ENCODE measurements at regions of chr9 and their contacts with region 1.

Region 1: GRCh38 chr9:105694190-105694847 is at the start of gene TMEM38B:
- DNase-seq: peak; percentile 77 to 86 (median 83)
- H3K4me3 ChIP-seq: peak within 1 kb of the TSS; percentile 59 to 79
- H3K4me3 Mint-ChIP-seq: peak within 1 kb of the TSS; percentile 87 to 96 (median 90)
- H3K27ac ChIP-seq: peak within 1 kb of the TSS; percentile 37
- H3K27ac Mint-ChIP-seq: peak within 1 kb of the TSS; percentile 63 to 85 (median 79)
- H3K4me1 ChIP-seq: peaks cover 20% of the 10 kb centered on the region
- H3K4me1 Mint-ChIP-seq: peaks cover 16 to 31% (median 23%) of the 10 kb centered on the region in 4 donors
- H3K27me3 ChIP-seq: peaks cover 11% of the 10 kb centered on the region
- H3K27me3 Mint-ChIP-seq: peaks cover 7 to 21% of the 10 kb centered on the region in 2 donors
- total RNA-seq, gene TMEM38B: 13.4 to 16.6 TPM

Region 2: GRCh38 chr9:104093647-104094533 is 1600.4 kb before region 1 on chr9 and contains the start of gene SMC2:
- CTCF ChIA-PET with region 1: no interaction called
- POLR2A ChIA-PET with region 1: no interaction called
- intact Hi-C with region 1: loop called (anchors 2 kb)
- DNase-seq: peak; percentile 93 to 96 (median 95)
- H3K4me3 ChIP-seq: peak within 1 kb of the TSS; percentile 63 to 90
- H3K4me3 Mint-ChIP-seq: peak within 1 kb of the TSS; percentile 98 to 100 (median 99)
- H3K27ac ChIP-seq: peak within 1 kb of the TSS; percentile 79
- H3K27ac Mint-ChIP-seq: peak within 1 kb of the TSS; percentile 99 to 100 (median 99)
- H3K4me1 ChIP-seq: peaks cover 30% of the 10 kb centered on the region
- H3K4me1 Mint-ChIP-seq: peaks cover 26 to 46% (median 30%) of the 10 kb centered on the region in 4 donors
- H3K27me3 ChIP-seq: no peaks in the 10 kb centered on the region
- H3K27me3 Mint-ChIP-seq: peaks cover 0 to 3% of the 10 kb centered on the region in 2 donors
- total RNA-seq, gene SMC2: 9.7 to 10.4 TPM

Region 3: GRCh38 chr9:104991144-104991953 is 703.0 kb before region 1 on chr9:
- CTCF ChIA-PET with region 1: no interaction called
- POLR2A ChIA-PET with region 1: no interaction called
- intact Hi-C with region 1: loop called (anchors 2 kb)
- DNase-seq: peak; percentile 85 to 88 (median 88)
- H3K4me3 ChIP-seq: peak overlapping the region; percentile 94 to 98
- H3K4me3 Mint-ChIP-seq: peak overlapping the region; percentile 87 to 94 (median 92)
- H3K27ac ChIP-seq: peak overlapping the region; percentile 76
- H3K27ac Mint-ChIP-seq: peak overlapping the region; percentile 96 to 99 (median 98)
- H3K4me1 ChIP-seq: peaks cover 38% of the 10 kb centered on the region
- H3K4me1 Mint-ChIP-seq: peaks cover 21 to 45% (median 33%) of the 10 kb centered on the region in 4 donors
- H3K27me3 ChIP-seq: no peaks in the 10 kb centered on the region
- H3K27me3 Mint-ChIP-seq: peaks cover 0 to 1% of the 10 kb centered on the region in 2 donors

Region 4: DNA sequence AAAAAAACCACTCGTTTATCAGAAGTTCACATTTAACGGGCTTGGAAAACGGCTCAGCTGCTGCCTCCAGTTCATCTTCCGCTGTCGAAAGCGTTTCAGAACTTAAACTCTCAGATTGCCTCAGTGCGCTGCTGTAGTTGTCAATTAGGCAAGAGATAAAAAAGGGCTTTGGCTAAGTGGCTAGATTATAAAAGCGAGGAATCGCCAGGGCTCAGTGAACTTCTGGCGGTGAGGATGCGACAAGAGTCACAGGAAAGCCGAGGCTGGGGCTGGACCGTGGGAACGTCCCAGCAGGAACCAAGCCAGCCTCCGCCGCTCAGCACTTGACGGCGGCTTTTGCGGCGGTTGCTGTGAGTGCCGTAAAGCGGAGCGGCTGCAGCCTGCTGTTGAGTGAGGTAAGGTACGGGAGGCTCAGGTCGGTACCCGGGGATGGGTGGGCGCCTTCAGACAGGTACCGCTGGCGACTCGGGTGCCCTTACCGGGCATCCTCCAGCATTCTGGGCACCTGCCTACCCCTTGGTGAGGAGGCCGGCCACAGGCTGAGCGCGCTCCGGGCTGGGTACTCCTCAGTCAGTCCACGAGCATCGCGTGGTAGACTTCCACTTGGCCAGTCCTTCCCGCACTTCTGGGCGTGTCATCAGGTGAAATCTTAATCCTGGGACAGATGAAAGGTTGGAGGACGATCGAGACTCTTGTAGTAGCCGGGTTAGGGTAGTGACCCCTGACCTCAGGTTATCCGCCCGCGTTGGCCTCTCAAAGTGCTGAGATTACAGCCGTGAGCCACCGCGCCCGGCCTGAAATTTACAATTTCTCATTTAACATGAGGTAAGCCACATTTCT is 136.3 kb before region 1 on chr9 and contains the start of gene FKTN:
- CTCF ChIA-PET with region 1: no interaction called
- POLR2A ChIA-PET with region 1: no interaction called
- intact Hi-C with region 1: loop called (anchors 2 kb)
- DNase-seq: peak; percentile 81 to 86 (median 83)
- H3K4me3 ChIP-seq: peak within 1 kb of the TSS; percentile 76 to 77
- H3K4me3 Mint-ChIP-seq: peak within 1 kb of the TSS; percentile 89 to 97 (median 96)
- H3K27ac ChIP-seq: peak within 1 kb of the TSS; percentile 46
- H3K27ac Mint-ChIP-seq: peak within 1 kb of the TSS; percentile 74 to 95 (median 90)
- H3K4me1 ChIP-seq: peaks cover 10% of the 10 kb centered on the region
- H3K4me1 Mint-ChIP-seq: peaks cover 14 to 24% (median 20%) of the 10 kb centered on the region in 4 donors
- H3K27me3 ChIP-seq: no peaks in the 10 kb centered on the region
- H3K27me3 Mint-ChIP-seq: no peaks in the 10 kb centered on the region
- total RNA-seq, gene FKTN: 13.9 to 14.2 TPM

Region 5: DNA sequence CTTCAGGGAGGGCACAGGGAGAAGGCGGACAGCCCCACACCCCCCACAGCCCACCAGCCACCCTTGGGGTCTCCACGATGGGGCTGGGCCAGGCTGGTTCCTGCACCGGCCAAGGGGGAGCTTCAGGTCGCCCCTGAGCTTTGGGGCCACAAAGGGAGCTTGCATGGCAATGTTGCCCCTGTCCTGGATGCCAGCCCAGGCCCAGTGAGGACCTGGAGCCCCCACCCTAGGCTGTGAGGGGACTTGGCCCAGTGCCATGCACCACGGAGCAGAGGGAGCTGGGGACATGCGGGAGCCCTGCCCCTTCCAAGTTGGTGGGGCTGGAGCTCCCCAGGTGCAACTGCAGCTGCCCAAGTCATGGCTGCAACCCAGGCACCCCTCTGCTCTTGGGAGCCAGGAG is 18.5 kb after region 1 on chr9:
- CTCF ChIA-PET with region 1: interaction called, 12 read pairs
- POLR2A ChIA-PET with region 1: interaction called, 5 read pairs
- intact Hi-C with region 1: no loop called
- DNase-seq: no peak
- H3K4me3 ChIP-seq: no peak overlapping the region
- H3K4me3 Mint-ChIP-seq: no peak overlapping the region
- H3K27ac ChIP-seq: no peak overlapping the region
- H3K27ac Mint-ChIP-seq: no peak overlapping the region
- H3K4me1 ChIP-seq: no peaks in the 10 kb centered on the region
- H3K4me1 Mint-ChIP-seq: peaks cover 0 to 10% (median 6%) of the 10 kb centered on the region in 4 donors
- H3K27me3 ChIP-seq: no peaks in the 10 kb centered on the region
- H3K27me3 Mint-ChIP-seq: no peaks in the 10 kb centered on the region

Region 6: DNA sequence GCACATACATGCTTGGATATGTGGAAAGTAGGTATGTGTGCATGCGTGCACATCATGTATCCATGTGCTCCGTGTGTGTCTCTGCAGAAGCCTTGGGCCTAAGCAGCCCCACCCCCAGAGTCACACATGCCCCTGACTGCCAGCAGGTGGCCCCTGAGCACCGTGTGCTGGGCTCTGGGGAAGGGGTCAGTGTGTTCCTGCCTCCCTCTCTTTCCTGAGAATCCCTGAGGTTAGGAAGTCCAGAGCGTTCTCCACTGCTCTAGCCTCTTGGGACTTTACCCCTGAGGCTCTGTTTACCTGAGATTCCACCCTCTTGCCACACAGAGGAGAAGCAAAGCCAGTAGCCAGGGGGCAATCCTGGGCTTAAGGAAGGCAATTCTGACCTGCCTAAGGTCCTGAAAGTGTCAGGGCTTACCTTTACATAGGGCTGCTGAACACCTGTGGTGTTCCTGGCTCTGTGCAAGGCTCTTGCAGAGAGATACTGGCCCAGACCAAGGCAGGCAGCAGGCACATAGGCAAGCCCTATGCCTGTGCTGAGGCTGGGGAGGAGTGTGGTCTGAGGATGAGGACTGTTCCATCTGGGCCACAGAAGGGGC is 207.3 kb after region 1 on chr9:
- CTCF ChIA-PET with region 1: no interaction called
- POLR2A ChIA-PET with region 1: no interaction called
- intact Hi-C with region 1: no loop called
- DNase-seq: no peak
- H3K4me3 ChIP-seq: no peak overlapping the region
- H3K4me3 Mint-ChIP-seq: no peak overlapping the region
- H3K27ac ChIP-seq: no peak overlapping the region
- H3K27ac Mint-ChIP-seq: no peak overlapping the region
- H3K4me1 ChIP-seq: no peaks in the 10 kb centered on the region
- H3K4me1 Mint-ChIP-seq: no peaks in the 10 kb centered on the region
- H3K27me3 ChIP-seq: no peaks in the 10 kb centered on the region
- H3K27me3 Mint-ChIP-seq: peaks cover 0 to 3% of the 10 kb centered on the region in 2 donors

Measured in CD4-positive, alpha-beta memory T cell (primary cell).